HepG2 (cell line): ENCODE measurements at regions of chr2 and their contacts with region 1.

Region 1: GRCh38 chr2:88903749-88904353 is 212.4 kb downstream of the RPIA start:
- DNase-seq: peak; percentile 58
- ATAC-seq: peak; percentile 94
- H3K4me3 ChIP-seq: no peak overlapping the region
- H3K27ac ChIP-seq: no peak overlapping the region
- H3K4me1 ChIP-seq: no peaks in the 10 kb centered on the region
- H3K27me3 ChIP-seq: no peaks in the 10 kb centered on the region
- CTCF ChIP-seq: peak; percentile 88
- EP300 ChIP-seq: no peak
- POLR2A ChIP-seq: no peak
- RAD21 ChIP-seq: peak; percentile 69

Region 2: GRCh38 chr2:88765154-88765900 is 138.5 kb before region 1 on chr2:
- CTCF ChIA-PET with region 1: no interaction called
- POLR2A ChIA-PET with region 1: no interaction called
- in situ Hi-C with region 1: no loop called
- intact Hi-C with region 1: no loop called
- DNase-seq: no peak
- ATAC-seq: peak; percentile 23; the same call in 1 of the 3 replicates
- H3K4me3 ChIP-seq: no peak overlapping the region
- H3K27ac ChIP-seq: no peak overlapping the region
- H3K4me1 ChIP-seq: no peaks in the 10 kb centered on the region
- H3K27me3 ChIP-seq: no peaks in the 10 kb centered on the region
- CTCF ChIP-seq: no peak
- EP300 ChIP-seq: no peak
- POLR2A ChIP-seq: no peak
- RAD21 ChIP-seq: no peak

Region 3: DNA sequence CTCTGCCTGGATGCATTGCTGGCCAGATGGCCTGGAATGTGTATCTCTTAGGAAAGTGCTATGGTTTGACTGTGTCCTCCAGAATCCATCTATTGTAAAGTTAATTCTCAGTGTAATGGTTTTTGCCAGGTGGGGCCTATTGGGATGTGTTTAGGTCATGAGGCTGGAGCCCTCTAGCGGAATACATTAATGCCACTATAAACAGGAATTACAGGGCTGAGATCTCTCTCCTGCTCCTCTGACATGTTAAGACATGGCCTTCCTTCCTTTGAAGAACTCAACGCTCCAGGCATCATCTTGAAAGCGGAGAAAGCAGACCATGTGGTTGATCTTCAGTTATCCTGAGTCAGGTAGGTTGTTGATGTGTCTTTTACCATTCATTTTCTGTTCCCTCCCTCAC is 64.0 kb after region 1 on chr2:
- CTCF ChIA-PET with region 1: no interaction called
- POLR2A ChIA-PET with region 1: no interaction called
- in situ Hi-C with region 1: no loop called
- intact Hi-C with region 1: loop called (anchors 5 kb)
- DNase-seq: peak; percentile 15
- ATAC-seq: peak; percentile 83
- H3K4me3 ChIP-seq: no peak overlapping the region
- H3K27ac ChIP-seq: no peak overlapping the region
- H3K4me1 ChIP-seq: no peaks in the 10 kb centered on the region
- H3K27me3 ChIP-seq: 0 out of 5 replicates have a peak, but pooled peaks cover 0 to 3% of the 10 kb centered on the region in 2 experiments
- CTCF ChIP-seq: peak; percentile 44
- EP300 ChIP-seq: no peak
- POLR2A ChIP-seq: no peak
- RAD21 ChIP-seq: no peak